KBM-7 (cell line): ENCODE measurements at regions of chr6 and their contacts with region 1.

Region 1: GRCh38 chr6:81997091-81997926 is 244.8 kb upstream of the TENT5A start:
- DNase-seq: peak; percentile 56

Region 2: GRCh38 chr6:81553216-81553615 is 444.1 kb before region 1 on chr6:
- in situ Hi-C with region 1: no loop called
- DNase-seq: no peak

Region 3: DNA sequence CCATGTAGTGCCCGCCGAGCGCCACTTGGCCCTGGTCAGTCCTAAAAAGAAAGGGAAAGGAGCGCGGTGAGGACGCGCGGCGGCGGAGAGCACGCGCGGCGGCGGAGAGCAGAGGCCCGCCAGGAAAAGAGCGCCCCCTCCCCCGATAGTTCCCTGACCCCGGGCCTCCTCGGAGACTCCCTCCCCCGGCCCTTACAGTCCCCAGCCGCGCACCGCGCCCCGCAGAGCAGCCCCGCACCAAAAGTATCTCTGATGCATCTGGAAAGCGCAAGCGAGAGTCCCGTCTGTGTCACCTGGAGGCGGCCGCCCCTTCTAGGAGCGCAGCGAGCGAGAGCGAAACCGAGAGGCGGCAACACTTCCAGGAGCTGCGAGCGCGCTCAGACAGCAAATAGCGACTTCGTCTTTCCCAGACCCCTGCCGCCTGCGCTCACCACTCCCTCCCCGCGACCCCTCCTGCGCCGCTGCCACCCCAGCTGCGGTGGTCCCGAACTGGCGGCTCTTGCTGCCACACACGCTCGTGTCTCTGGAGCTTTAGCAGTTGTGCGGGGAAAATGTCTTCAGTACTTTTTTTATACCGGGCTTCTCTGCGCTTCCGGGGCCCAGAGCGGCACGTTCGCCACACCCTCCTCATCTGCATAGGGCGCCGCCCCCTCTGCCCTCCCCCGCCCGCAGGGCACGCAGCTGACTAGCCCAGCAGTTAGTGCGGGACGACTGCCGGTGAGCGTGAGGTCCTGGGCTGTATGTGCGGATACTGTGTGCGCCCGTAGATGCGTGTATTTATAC is 245.0 kb before region 1 on chr6 and contains the start of gene TENT5A:
- in situ Hi-C with region 1: loop called (anchors 25 kb)
- DNase-seq: peak; percentile 91

Region 4: GRCh38 chr6:82185948-82186535 is 188.7 kb after region 1 on chr6:
- in situ Hi-C with region 1: no loop called
- DNase-seq: no peak

Region 5: GRCh38 chr6:82396964-82397751 is 399.8 kb after region 1 on chr6:
- in situ Hi-C with region 1: no loop called
- DNase-seq: no peak